Right ventricle myocardium superior (tissue), 1 donor: ENCODE measurements at regions of chr9 and their contacts with region 1.

Region 1: GRCh38 chr9:110623462-110624025 is 44.0 kb upstream of the SVEP1 start:
- DNase-seq: no peak
- ATAC-seq: peak; percentile 68

Region 2: GRCh38 chr9:110183208-110184145 is 440.1 kb before region 1 on chr9:
- intact Hi-C with region 1: loop called (anchors 5 kb)
- DNase-seq: no peak
- ATAC-seq: peak; percentile 80

Region 3: DNA sequence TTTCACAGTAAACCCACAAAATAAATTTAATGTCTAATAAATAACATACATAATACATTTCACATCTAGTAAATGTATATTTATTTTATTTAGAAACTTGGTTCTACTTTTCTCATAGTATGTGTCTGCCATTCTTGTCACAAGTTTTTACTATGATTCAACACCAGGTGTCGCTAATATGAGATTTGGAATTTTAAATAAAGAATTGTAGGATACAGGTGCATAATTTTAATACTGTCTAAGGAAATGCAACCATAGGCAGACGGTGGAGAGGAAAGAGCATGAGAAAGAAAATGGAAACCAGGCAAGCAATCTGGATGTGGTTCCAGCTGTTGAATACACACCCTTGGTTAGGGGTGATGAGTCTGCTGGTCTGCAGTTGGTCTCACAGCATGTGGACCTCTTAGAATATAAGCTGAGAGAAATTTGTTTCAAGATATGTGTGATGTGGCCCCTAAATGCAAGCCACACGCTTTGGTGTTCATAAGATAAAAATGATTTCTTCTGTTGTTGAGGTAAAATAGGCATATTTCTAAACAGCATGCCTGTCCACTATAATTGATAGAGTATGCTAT is 171.2 kb before region 1 on chr9:
- intact Hi-C with region 1: loop called (anchors 10 kb)
- DNase-seq: no peak
- ATAC-seq: no peak